ENCODE measurements at regions of chr18 and their contacts with region 1.

Region 1: DNA sequence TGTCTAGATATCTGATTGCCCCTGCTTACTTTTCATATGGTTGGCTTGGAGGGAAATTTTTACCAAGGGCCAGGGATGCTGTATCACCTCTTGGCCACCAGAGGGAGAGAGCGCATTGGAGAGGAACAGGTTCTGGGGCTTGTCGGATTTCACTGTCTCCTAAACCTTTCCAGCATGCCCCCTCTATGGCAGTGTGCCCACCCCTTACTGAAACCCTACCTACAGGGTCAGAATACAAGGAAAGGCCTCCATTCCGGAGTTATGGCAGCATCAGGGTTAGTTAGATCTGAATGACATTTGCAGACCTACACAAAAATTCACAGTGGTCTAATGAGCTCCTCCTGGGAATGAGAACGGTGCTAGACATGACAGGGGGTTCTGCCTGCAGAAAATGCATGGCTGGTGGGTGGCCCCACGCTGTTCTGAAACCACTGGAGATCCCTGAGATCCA is 5.8 kb downstream of the SLC14A2 start:
- DNase-seq: peak in 4 of 5 donors; percentile 38 to 52 (median 46)
- H3K4me3 ChIP-seq: no peak overlapping the region
- H3K4me3 Mint-ChIP-seq: no peak overlapping the region
- H3K27ac ChIP-seq: no peak overlapping the region
- H3K27ac Mint-ChIP-seq: no peak overlapping the region
- H3K4me1 ChIP-seq: no peaks in the 10 kb centered on the region
- H3K4me1 Mint-ChIP-seq: no peaks in the 10 kb centered on the region
- H3K27me3 ChIP-seq: no peaks in the 10 kb centered on the region
- H3K27me3 Mint-ChIP-seq: peaks cover 4 to 7% of the 10 kb centered on the region in 2 donors

Region 2: GRCh38 chr18:45576931-45577330 is 44.2 kb before region 1 on chr18:
- CTCF ChIA-PET with region 1: no interaction called
- POLR2A ChIA-PET with region 1: no interaction called
- intact Hi-C with region 1: no loop called
- DNase-seq: no peak
- H3K4me3 ChIP-seq: no peak overlapping the region
- H3K4me3 Mint-ChIP-seq: no peak overlapping the region
- H3K27ac ChIP-seq: no peak overlapping the region
- H3K27ac Mint-ChIP-seq: no peak overlapping the region
- H3K4me1 ChIP-seq: no peaks in the 10 kb centered on the region
- H3K4me1 Mint-ChIP-seq: no peaks in the 10 kb centered on the region
- H3K27me3 ChIP-seq: no peaks in the 10 kb centered on the region
- H3K27me3 Mint-ChIP-seq: peaks cover 0 to 6% of the 10 kb centered on the region in 2 donors

Region 3: GRCh38 chr18:45608400-45608799 is 12.7 kb before region 1 on chr18:
- CTCF ChIA-PET with region 1: interaction called, 10 read pairs
- POLR2A ChIA-PET with region 1: no interaction called
- intact Hi-C with region 1: no loop called
- DNase-seq: no peak
- H3K4me3 ChIP-seq: no peak overlapping the region
- H3K4me3 Mint-ChIP-seq: no peak overlapping the region
- H3K27ac ChIP-seq: no peak overlapping the region
- H3K27ac Mint-ChIP-seq: no peak overlapping the region
- H3K4me1 ChIP-seq: no peaks in the 10 kb centered on the region
- H3K4me1 Mint-ChIP-seq: no peaks in the 10 kb centered on the region
- H3K27me3 ChIP-seq: no peaks in the 10 kb centered on the region
- H3K27me3 Mint-ChIP-seq: peaks cover 16 to 24% of the 10 kb centered on the region in 2 donors

Region 4: GRCh38 chr18:45657357-45658335 is 36.6 kb after region 1 on chr18:
- CTCF ChIA-PET with region 1: interaction called, 35 read pairs
- POLR2A ChIA-PET with region 1: no interaction called
- intact Hi-C with region 1: no loop called
- DNase-seq: peak in 4 of 5 donors; percentile 45 to 61 (median 56)
- H3K4me3 ChIP-seq: no peak overlapping the region
- H3K4me3 Mint-ChIP-seq: peak overlapping the region in 7 of 8 donors; percentile 36 to 71 (median 51)
- H3K27ac ChIP-seq: peak overlapping the region; percentile 12
- H3K27ac Mint-ChIP-seq: peak overlapping the region; percentile 19 to 71 (median 31)
- H3K4me1 ChIP-seq: peaks cover 33% of the 10 kb centered on the region
- H3K4me1 Mint-ChIP-seq: peaks cover 26 to 57% (median 35%) of the 10 kb centered on the region in 4 donors
- H3K27me3 ChIP-seq: no peaks in the 10 kb centered on the region
- H3K27me3 Mint-ChIP-seq: no peaks in the 10 kb centered on the region

Region 5: GRCh38 chr18:45879681-45880655 is 258.9 kb after region 1 on chr18:
- CTCF ChIA-PET with region 1: interaction called, 6 read pairs
- POLR2A ChIA-PET with region 1: no interaction called
- intact Hi-C with region 1: loop called (anchors 1 kb)
- DNase-seq: peak; percentile 64 to 74 (median 68)
- H3K4me3 ChIP-seq: no peak overlapping the region
- H3K4me3 Mint-ChIP-seq: peak overlapping the region in 1 of 8 donors; percentile 17
- H3K27ac ChIP-seq: no peak overlapping the region
- H3K27ac Mint-ChIP-seq: peak overlapping the region in 5 of 7 donors; percentile 30 to 82 (median 51)
- H3K4me1 ChIP-seq: peaks cover 16% of the 10 kb centered on the region
- H3K4me1 Mint-ChIP-seq: peaks cover 10 to 19% (median 16%) of the 10 kb centered on the region in 4 donors
- H3K27me3 ChIP-seq: no peaks in the 10 kb centered on the region
- H3K27me3 Mint-ChIP-seq: no peaks in the 10 kb centered on the region

Region 6: DNA sequence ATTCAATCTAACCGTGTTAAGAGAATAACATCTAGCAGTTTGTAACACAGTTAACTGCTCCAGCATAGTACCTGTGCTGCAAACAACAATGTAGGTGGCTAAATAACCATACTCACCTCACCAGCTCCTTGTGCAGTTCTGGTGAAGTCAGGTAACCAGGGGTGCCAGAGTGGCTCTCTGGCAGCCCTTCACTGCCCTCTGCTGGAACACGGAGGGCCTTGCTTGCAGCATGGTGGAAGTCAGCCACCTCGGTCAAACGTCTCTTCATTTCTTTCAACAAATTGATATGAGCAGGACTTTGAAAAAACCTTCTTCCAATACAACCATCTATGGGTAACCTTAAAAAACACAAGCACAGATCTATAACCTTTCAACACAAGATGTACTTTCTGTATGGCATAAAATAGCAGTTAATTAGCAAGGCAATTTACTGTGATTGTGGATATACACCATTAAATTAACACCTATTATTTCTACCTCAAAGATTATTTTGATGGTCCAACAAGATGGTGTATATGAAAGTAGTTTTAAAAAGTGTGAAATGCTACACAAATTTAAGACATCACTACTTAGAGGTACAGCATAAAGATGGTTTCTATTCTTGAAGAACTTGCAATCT is 289.4 kb after region 1 on chr18:
- CTCF ChIA-PET with region 1: interaction called, 5 read pairs
- POLR2A ChIA-PET with region 1: no interaction called
- intact Hi-C with region 1: loop called (anchors 1 kb)
- DNase-seq: peak; percentile 45 to 61 (median 57)
- H3K4me3 ChIP-seq: no peak overlapping the region
- H3K4me3 Mint-ChIP-seq: no peak overlapping the region
- H3K27ac ChIP-seq: no peak overlapping the region
- H3K27ac Mint-ChIP-seq: peak overlapping the region in 2 of 7 donors; percentile 12 to 70
- H3K4me1 ChIP-seq: no peaks in the 10 kb centered on the region
- H3K4me1 Mint-ChIP-seq: peaks cover 0 to 6% (median 4%) of the 10 kb centered on the region in 4 donors
- H3K27me3 ChIP-seq: no peaks in the 10 kb centered on the region
- H3K27me3 Mint-ChIP-seq: no peaks in the 10 kb centered on the region

Region 7: GRCh38 chr18:45974088-45974536 is 353.0 kb after region 1 on chr18:
- CTCF ChIA-PET with region 1: interaction called, 3 read pairs
- POLR2A ChIA-PET with region 1: interaction called, 8 read pairs
- intact Hi-C with region 1: loop called (anchors 1 kb)
- DNase-seq: peak; percentile 60 to 80 (median 66)
- H3K4me3 ChIP-seq: no peak overlapping the region
- H3K4me3 Mint-ChIP-seq: peak overlapping the region in 3 of 8 donors; percentile 0 to 34 (median 1)
- H3K27ac ChIP-seq: no peak overlapping the region
- H3K27ac Mint-ChIP-seq: no peak overlapping the region
- H3K4me1 ChIP-seq: peaks cover 8% of the 10 kb centered on the region
- H3K4me1 Mint-ChIP-seq: peaks cover 8 to 18% (median 10%) of the 10 kb centered on the region in 4 donors
- H3K27me3 ChIP-seq: no peaks in the 10 kb centered on the region
- H3K27me3 Mint-ChIP-seq: no peaks in the 10 kb centered on the region

Region 8: GRCh38 chr18:45984546-45985235 is 363.6 kb after region 1 on chr18:
- CTCF ChIA-PET with region 1: no interaction called
- POLR2A ChIA-PET with region 1: no interaction called
- intact Hi-C with region 1: no loop called
- DNase-seq: no peak
- H3K4me3 ChIP-seq: no peak overlapping the region
- H3K4me3 Mint-ChIP-seq: no peak overlapping the region
- H3K27ac ChIP-seq: no peak overlapping the region
- H3K27ac Mint-ChIP-seq: peak overlapping the region in 1 of 7 donors; percentile 48
- H3K4me1 ChIP-seq: no peaks in the 10 kb centered on the region
- H3K4me1 Mint-ChIP-seq: no peaks in the 10 kb centered on the region
- H3K27me3 ChIP-seq: no peaks in the 10 kb centered on the region
- H3K27me3 Mint-ChIP-seq: no peaks in the 10 kb centered on the region